Mucosa of descending colon (tissue), 3 donors: ENCODE measurements at regions of chr1 and their contacts with region 1.

Region 1: GRCh38 chr1:156659994-156660751 is 17.0 kb downstream of the NES start:
- DNase-seq: peak; percentile 94 to 96 (median 95)
- ATAC-seq: peak; percentile 88
- H3K4me3 ChIP-seq: no peak overlapping the region
- H3K4me1 ChIP-seq: peaks cover 59% of the 10 kb centered on the region
- CTCF ChIP-seq: peak; percentile 99

Region 2: GRCh38 chr1:156583821-156584622 is 76.2 kb before region 1 on chr1:
- intact Hi-C with region 1: loop called in 1 of 2 experiments (anchors 5 kb)
- DNase-seq: peak in 2 of 3 donors; percentile 39 to 95
- ATAC-seq: peak; percentile 78
- H3K4me3 ChIP-seq: no peak overlapping the region
- H3K4me1 ChIP-seq: no peaks in the 10 kb centered on the region
- CTCF ChIP-seq: peak; percentile 93

Region 3: DNA sequence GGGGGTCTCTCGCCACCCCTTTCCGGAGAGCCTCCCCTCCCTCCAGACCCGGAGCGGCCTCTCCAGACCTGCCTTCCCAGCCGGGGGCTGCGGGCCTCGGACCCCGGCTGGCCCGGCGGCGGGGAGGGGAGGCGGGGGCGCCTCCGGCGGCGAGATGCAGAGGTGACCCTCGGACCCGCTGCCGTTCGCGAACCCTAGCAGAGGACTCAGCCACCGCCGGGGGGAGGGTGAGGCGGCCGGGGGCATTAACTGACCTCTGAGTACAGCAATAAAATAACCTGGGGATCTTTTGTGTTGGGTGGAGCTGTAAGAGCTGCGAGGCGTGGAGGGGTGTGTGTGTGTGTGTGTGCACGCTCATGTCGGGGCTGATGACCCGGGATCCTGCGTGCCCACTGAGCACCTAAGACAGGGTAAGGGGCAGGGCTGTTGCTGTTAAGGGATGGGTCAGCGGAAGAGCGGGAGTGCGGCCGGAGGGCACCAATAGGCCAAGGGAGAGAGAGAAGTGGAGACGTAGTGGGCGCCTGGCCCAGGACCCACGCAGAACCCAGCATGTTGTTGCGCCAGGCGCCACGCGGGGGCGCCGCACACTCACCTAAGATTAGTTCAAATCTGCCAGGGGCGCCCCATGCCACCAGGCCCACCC is 34.6 kb before region 1 on chr1:
- intact Hi-C with region 1: loop called (anchors 2 kb)
- DNase-seq: peak in 2 of 3 donors; percentile 59 to 71
- ATAC-seq: peak; percentile 61
- H3K4me3 ChIP-seq: no peak overlapping the region
- H3K4me1 ChIP-seq: peaks cover 22% of the 10 kb centered on the region
- CTCF ChIP-seq: peak; percentile 55